PC-9 (cell line): ENCODE measurements at regions of chr2 and their contacts with region 1.

Region 1: DNA sequence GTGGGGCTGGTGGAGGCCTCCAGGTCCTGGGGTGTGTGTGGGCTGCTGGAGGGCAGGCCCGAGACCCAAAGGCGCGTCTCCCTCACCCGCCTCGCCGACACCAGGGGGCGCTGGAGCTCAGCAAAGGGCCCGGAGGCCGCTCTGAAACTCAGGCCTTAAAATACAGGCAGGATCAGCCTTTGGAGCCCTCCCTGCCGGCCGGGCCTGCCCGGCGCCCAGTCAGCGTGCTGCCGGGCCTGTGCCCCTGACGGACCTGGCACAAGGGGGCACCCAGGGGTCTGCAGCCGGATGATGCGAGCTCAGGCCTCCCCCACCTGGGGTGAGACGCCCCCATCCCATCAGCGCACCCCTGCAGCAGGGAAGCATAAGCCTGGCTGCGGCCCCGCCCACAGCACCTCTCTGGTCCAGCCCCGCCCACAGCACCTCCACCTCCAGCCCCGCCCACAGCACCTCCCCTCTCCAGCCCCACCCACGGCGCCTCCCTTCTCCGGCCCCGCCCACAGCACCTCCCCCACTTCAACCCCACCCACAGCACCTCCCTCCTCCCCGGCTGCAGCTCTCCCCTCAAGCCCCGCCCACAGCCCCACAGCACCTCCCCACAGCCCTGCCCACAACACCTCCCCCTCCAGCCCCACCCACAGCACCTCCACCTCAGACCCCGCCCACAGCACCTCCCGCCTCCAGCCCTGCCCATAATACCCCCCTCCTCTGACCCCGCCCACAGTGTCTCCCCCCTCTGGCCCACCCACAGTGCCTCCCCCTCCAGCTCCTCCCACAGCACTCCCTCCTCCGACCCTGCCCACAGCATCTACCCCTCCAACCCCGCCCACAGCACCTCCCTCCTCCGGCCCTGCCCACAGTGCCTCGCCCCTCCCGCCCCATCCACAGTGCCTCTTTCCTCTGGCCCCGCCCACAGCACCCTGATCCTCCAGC is 92.8 kb upstream of the OTOS start:
- DNase-seq: peak; percentile 79 to 99
- H3K4me3 ChIP-seq: peak overlapping the region; percentile 53
- H3K27ac ChIP-seq: no peak overlapping the region
- H3K4me1 ChIP-seq: peaks cover 11% of the 10 kb centered on the region; the same call in 1 of the 2 replicates
- H3K27me3 ChIP-seq: no peaks in the 10 kb centered on the region
- CTCF ChIP-seq: peak; percentile 98

Region 2: GRCh38 chr2:239824046-239824694 is 409.1 kb before region 1 on chr2:
- CTCF ChIA-PET with region 1: no interaction called
- POLR2A ChIA-PET with region 1: interaction called, 36 read pairs
- intact Hi-C with region 1: no loop called
- DNase-seq: peak; percentile 69 to 74
- H3K4me3 ChIP-seq: no peak overlapping the region
- H3K27ac ChIP-seq: no peak overlapping the region
- H3K4me1 ChIP-seq: no peaks in the 10 kb centered on the region
- H3K27me3 ChIP-seq: peaks cover 94% of the 10 kb centered on the region
- CTCF ChIP-seq: peak; percentile 62

Region 3: GRCh38 chr2:240250985-240251847 is 18.0 kb after region 1 on chr2:
- CTCF ChIA-PET with region 1: interaction called, 8 read pairs
- POLR2A ChIA-PET with region 1: interaction called, 27 read pairs
- intact Hi-C with region 1: loop called (anchors 1 kb)
- DNase-seq: peak; percentile 92 to 98
- H3K4me3 ChIP-seq: peak overlapping the region; percentile 48; the same call in 1 of the 2 replicates
- H3K27ac ChIP-seq: peak overlapping the region; percentile 86
- H3K4me1 ChIP-seq: peaks cover 39% of the 10 kb centered on the region
- H3K27me3 ChIP-seq: no peaks in the 10 kb centered on the region
- CTCF ChIP-seq: no peak

Region 4: GRCh38 chr2:240355001-240355976 is 122.1 kb after region 1 on chr2:
- CTCF ChIA-PET with region 1: no interaction called
- POLR2A ChIA-PET with region 1: no interaction called
- intact Hi-C with region 1: no loop called
- DNase-seq: no peak
- H3K4me3 ChIP-seq: no peak overlapping the region
- H3K27ac ChIP-seq: no peak overlapping the region
- H3K4me1 ChIP-seq: no peaks in the 10 kb centered on the region
- H3K27me3 ChIP-seq: peaks cover 20% of the 10 kb centered on the region; the same call in 1 of the 2 replicates
- CTCF ChIP-seq: no peak

Region 5: GRCh38 chr2:240426797-240427721 is 193.8 kb after region 1 on chr2:
- CTCF ChIA-PET with region 1: interaction called, 9 read pairs
- POLR2A ChIA-PET with region 1: interaction called, 6 read pairs
- intact Hi-C with region 1: loop called (anchors 2 kb)
- DNase-seq: peak; percentile 91 to 95
- H3K4me3 ChIP-seq: peak overlapping the region; percentile 9; the same call in 1 of the 2 replicates
- H3K27ac ChIP-seq: peak overlapping the region; percentile 78
- H3K4me1 ChIP-seq: peaks cover 25% of the 10 kb centered on the region
- H3K27me3 ChIP-seq: no peaks in the 10 kb centered on the region
- CTCF ChIP-seq: no peak

Region 6: DNA sequence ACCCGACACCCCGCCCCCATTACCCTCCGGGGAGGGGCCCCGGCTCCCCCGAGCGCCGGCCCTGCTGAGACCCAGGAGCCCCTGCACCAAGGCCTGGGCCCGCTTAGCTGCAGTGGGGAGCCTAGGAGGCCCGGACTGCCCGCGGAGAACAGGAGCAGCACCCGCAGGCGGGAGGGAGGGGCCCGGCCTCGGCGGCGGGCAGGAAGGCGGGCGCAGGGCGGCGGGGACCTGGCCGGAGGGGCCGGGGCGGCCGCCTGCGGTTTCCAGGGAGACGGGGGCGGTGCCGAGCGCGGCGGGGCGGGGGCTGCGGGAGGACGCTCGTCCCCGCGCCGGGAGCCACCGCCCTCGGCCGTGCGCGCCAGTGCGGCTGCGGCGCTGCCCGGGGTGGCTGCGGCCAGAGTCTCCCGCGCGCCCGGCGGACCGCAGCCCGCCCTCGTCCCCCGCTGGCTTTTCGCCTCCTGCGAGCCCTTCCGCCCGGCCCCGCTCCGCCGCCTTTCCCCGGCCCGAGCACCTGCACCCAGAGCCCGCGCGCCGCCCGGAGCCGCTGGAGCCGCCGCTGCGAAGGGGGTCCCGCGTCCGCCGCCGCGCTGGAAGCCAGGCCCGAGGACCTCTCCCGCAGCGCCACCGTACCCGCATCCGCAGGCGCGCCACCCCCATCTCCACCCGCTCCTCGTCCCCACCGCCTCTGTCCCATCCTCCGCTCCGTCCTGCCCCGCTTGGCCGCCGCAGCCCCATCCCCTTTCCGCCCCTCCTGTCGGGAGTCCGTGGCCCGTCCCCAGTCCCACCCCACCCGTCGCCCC is 219.4 kb after region 1 on chr2:
- CTCF ChIA-PET with region 1: interaction called, 10 read pairs
- POLR2A ChIA-PET with region 1: no interaction called
- intact Hi-C with region 1: loop called (anchors 1 kb)
- DNase-seq: peak; percentile 58 to 97
- H3K4me3 ChIP-seq: peak overlapping the region; percentile 60; the same call in 1 of the 2 replicates
- H3K27ac ChIP-seq: no peak overlapping the region
- H3K4me1 ChIP-seq: peaks cover 44% of the 10 kb centered on the region
- H3K27me3 ChIP-seq: no peaks in the 10 kb centered on the region
- CTCF ChIP-seq: no peak

Region 7: DNA sequence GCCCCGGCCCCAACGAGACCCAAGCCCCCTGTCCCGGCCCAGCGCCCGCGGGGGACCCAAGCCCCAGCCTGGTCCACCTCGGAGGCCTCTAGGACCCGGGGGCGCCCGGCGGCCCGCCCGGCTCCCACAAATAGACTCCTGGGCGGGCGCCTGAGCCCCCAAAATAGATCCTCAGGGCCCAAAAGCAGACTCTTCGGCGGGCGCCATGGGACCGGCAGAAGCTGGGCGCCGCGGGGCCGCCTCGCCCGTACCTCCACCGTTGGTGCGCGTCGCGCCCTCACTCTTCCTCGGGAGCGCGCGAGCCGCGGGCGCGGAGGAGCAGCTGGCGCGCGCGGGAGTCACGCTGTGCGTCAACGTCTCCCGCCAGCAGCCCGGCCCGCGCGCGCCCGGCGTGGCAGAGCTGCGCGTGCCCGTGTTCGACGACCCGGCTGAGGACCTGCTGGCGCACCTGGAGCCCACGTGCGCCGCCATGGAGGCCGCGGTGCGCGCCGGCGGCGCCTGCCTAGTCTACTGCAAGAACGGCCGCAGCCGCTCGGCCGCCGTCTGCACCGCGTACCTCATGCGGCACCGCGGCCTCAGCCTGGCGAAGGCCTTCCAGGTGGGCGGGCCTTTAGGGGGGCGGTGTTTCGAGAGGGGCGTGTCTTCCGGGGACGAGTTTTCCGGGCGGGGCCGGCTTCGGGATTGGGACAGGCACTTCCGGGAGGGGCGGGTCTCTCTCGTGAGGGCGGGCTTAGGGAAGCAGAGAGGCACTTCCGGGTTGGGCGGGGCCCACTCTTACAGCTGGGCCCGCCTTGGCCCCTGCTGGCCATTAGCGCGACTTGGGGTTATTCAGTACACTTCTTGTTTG is 327.5 kb after region 1 on chr2:
- CTCF ChIA-PET with region 1: interaction called, 11 read pairs
- POLR2A ChIA-PET with region 1: no interaction called
- intact Hi-C with region 1: loop called (anchors 2 kb)
- DNase-seq: peak; percentile 94 to 100
- H3K4me3 ChIP-seq: peak overlapping the region; percentile 75
- H3K27ac ChIP-seq: peak overlapping the region; percentile 95
- H3K4me1 ChIP-seq: peaks cover 55% of the 10 kb centered on the region
- H3K27me3 ChIP-seq: no peaks in the 10 kb centered on the region
- CTCF ChIP-seq: no peak